MCF 10A (cell line): ENCODE measurements at regions of chr7 and their contacts with region 1.

Region 1: DNA sequence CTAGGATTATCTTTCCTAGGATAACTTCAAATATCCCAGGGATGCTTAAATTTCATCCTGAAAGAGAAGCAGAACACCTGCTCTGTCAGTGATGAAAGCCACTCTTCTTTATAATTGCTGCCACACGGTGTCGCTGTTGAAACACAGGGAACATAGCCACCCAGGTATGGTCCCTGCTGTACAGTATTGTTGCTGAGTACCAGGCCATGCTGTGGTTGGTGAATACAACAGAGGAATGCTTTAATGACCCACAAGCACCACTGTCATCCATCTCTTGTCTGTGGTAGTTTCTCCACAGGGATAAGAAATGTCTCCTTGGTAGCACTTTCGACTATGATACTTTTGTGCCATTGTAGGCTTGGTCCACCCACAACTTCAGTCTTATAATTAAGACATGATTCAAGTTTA is 70.6 kb upstream of the STARD3NL start:
- DNase-seq: peak; percentile 74
- H3K4me3 Mint-ChIP-seq: no peak overlapping the region
- H3K27ac Mint-ChIP-seq: no peak overlapping the region
- H3K4me1 Mint-ChIP-seq: no peaks in the 10 kb centered on the region
- H3K27me3 Mint-ChIP-seq: peaks cover 66% of the 10 kb centered on the region
- CTCF ChIP-seq: peak; percentile 68

Region 2: GRCh38 chr7:37208528-37208927 is 899.0 kb before region 1 on chr7:
- CTCF ChIA-PET with region 1: interaction called, 3 read pairs
- POLR2A ChIA-PET with region 1: no interaction called
- intact Hi-C with region 1: loop called (anchors 2 kb)
- DNase-seq: peak; percentile 87
- H3K4me3 Mint-ChIP-seq: no peak overlapping the region
- H3K27ac Mint-ChIP-seq: no peak overlapping the region
- H3K4me1 Mint-ChIP-seq: peaks cover 16% of the 10 kb centered on the region
- H3K27me3 Mint-ChIP-seq: no peaks in the 10 kb centered on the region
- CTCF ChIP-seq: peak; percentile 49

Region 3: DNA sequence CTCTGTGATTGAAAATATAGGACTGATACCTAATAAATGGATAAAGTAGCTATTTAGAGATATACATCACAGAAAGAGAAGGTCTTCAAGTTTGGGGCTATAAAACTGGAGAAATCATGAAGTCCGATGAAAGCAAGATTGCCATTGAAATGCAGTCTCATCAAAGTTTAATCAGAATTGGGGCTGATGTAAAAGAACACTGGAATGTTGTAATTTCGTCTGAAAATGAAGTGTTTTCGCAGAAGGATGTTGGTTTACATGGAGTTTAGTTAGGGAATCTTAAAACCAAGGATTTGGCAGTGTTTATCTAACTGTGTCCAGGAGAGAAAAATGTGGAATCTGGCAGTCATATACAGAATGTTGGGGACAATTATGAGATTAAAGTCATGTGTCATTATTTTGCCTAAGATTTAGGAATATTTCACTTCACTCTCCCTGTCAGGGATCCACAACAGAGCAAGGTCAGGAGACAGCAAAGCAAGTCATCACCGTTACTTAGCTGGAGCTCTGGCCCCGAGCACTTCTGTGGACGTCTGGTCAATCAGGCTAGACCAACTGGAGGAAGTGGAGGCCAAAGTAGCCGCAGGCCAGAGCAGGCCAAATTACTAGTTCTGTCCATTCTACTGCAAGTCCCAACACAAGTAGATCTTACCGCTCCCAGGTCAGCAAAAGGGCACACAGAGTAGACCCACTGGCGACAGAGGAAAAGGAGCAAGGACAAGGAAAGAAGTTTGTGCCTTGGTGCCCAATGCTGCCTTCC is 150.1 kb before region 1 on chr7:
- CTCF ChIA-PET with region 1: no interaction called
- POLR2A ChIA-PET with region 1: no interaction called
- intact Hi-C with region 1: no loop called
- DNase-seq: no peak
- H3K4me3 Mint-ChIP-seq: no peak overlapping the region
- H3K27ac Mint-ChIP-seq: no peak overlapping the region
- H3K4me1 Mint-ChIP-seq: no peaks in the 10 kb centered on the region
- H3K27me3 Mint-ChIP-seq: peaks cover 13% of the 10 kb centered on the region
- CTCF ChIP-seq: no peak

Region 4: DNA sequence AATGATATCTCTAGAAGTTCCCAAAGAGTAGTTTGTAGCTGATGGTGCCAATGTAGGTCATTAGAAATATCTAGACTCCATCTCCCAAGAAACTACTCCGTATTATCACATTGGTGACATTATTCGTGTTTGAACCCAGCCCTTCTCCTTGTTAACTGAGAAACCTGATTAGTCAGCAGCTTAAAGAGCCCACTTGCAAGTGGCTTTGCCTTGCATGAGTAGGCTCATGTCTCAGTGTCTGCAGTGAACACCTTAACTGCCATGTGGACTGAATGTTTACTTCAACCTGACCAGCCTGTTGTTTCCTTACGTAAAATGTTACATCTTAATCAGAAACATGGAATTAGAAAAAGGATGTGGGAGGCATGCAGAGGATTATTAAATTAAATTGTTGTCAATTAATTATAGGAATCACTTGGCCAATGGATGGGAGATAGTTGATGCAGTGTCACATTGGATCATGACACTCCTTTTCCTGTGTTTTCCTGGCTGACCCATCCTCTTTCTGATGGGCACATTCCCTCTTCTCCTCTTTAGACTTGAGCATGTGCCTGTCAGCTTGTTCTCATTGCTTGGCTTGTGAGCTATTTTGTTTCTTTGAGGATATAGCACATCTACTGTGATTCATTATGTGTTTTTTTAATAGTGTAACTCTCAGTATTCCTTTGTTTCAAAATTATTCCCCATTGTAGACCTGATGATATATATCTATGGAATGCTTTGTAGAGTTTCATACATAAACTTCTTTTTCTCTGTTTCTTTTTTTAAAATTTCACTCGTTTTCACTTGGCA is 88.5 kb after region 1 on chr7:
- CTCF ChIA-PET with region 1: interaction called, 11 read pairs
- POLR2A ChIA-PET with region 1: no interaction called
- intact Hi-C with region 1: no loop called
- DNase-seq: peak; percentile 55
- H3K4me3 Mint-ChIP-seq: peak overlapping the region; percentile 62
- H3K27ac Mint-ChIP-seq: peak overlapping the region; percentile 97
- H3K4me1 Mint-ChIP-seq: peaks cover 22% of the 10 kb centered on the region
- H3K27me3 Mint-ChIP-seq: no peaks in the 10 kb centered on the region
- CTCF ChIP-seq: no peak

Region 5: DNA sequence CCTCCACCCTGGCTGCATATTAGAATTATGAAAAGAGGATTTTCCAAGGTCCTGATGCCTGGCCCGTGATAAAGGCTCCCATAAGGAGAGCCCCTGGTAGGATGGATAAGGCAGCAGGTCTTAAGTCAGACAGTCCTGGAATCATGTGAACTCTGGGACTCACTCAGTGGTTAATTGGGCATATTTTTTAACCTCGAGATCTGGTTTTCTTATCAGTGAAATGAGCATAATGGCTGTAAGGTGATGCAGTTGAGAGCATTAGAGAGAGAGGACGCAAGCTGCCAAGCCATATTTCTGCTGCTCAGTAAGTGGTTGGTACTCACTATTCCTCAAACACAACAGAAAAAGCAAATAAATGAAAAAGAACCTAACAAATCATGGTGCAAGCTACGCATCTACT is 128.1 kb after region 1 on chr7:
- CTCF ChIA-PET with region 1: interaction called, 14 read pairs
- POLR2A ChIA-PET with region 1: no interaction called
- intact Hi-C with region 1: no loop called
- DNase-seq: no peak
- H3K4me3 Mint-ChIP-seq: no peak overlapping the region
- H3K27ac Mint-ChIP-seq: no peak overlapping the region
- H3K4me1 Mint-ChIP-seq: no peaks in the 10 kb centered on the region
- H3K27me3 Mint-ChIP-seq: no peaks in the 10 kb centered on the region
- CTCF ChIP-seq: no peak

Region 6: DNA sequence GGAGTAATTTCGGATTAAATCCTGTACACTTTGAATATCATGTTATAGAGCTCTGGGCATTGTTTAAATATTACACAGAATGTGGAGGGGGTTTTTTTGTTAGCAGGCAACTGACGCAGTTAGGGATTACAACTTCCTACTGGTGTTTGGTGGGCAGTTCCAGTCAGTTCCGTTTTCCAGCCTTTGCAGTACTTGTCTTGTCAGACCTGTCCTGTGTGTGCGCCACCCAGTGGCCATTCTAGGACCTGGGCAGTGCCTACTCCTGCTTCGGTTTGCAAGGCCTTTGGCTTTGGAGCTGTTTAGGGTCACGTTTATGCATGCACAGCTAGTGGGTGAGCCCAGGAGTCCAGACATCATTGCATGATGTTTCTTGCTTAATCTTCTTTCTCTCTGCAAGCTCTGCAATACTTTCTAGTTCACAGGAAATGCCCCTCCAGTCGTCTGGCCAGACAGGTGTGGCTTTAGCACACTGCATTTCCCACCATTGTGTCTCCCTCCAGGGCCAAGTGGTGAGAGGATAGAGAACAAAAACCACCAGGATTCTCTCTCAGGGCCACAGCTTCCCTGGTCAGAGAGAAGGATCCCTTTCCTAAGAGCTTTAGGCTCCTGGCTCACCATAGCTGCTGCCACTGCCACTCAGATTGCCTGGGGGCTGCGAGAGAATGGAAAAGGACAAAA is 262.5 kb after region 1 on chr7:
- CTCF ChIA-PET with region 1: interaction called, 44 read pairs
- POLR2A ChIA-PET with region 1: no interaction called
- intact Hi-C with region 1: no loop called
- DNase-seq: peak; percentile 84
- H3K4me3 Mint-ChIP-seq: no peak overlapping the region
- H3K27ac Mint-ChIP-seq: no peak overlapping the region
- H3K4me1 Mint-ChIP-seq: peaks cover 6% of the 10 kb centered on the region
- H3K27me3 Mint-ChIP-seq: peaks cover 12% of the 10 kb centered on the region
- CTCF ChIP-seq: peak; percentile 75